CD8-positive, alpha-beta T cell (primary cell): ENCODE measurements at regions of chr15 and their contacts with region 1.

Region 1: DNA sequence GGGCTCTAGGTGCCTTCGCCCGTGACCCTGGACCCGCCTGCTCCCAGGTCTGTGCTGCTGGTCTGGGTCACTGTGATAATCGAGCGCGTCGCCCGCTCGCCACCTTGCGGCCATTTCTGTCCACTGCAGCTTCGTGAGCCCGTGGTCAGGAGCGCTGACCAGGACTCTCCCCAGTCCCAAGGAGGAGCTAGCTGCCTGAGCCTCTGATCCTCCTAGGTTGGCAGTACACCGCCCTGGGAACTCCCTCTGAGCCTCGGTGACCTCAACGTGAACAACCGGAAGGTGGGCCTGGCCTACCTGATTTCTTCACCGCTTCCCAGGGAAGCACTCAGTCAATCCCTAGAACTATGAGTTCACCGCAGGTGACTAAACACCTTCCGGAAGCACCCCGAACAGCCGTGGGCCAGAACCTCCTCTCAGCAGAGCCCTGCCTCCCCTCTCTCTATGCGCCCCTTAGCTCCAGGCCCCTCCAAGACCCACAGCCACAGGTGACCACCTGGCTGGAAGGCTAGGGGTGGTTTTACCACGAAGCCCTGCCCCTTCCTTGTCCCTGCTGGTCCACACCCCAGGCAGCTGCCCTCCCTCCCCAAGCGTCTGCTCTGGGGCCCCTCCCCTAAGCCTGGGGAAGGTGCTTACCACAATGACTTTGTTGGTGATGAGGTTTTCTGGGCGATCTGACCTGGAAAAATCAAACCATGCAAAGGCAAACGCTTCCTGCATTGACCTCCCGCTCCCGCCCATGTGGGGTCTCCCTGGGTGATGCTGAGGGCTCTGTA is 9.7 kb downstream of the PLA2G4D start:
- DNase-seq: peak in 8 of 9 experiments; percentile 14 to 67 (median 41)
- ATAC-seq: peak; percentile 51
- H3K4me3 ChIP-seq: no peak overlapping the region
- H3K4me3 Mint-ChIP-seq: no peak overlapping the region
- H3K27ac ChIP-seq: no peak overlapping the region
- H3K27ac Mint-ChIP-seq: no peak overlapping the region
- H3K4me1 ChIP-seq: peaks cover 6% of the 10 kb centered on the region
- H3K4me1 Mint-ChIP-seq: peaks cover 3% of the 10 kb centered on the region
- H3K27me3 ChIP-seq: no peaks in the 10 kb centered on the region
- H3K27me3 Mint-ChIP-seq: peaks cover 9% of the 10 kb centered on the region
- CTCF ChIP-seq: peak; percentile 83

Region 2: GRCh38 chr15:42069496-42070278 is 15.0 kb before region 1 on chr15:
- CTCF ChIA-PET with region 1: interaction called, 12 read pairs
- POLR2A ChIA-PET with region 1: no interaction called
- intact Hi-C with region 1: no loop called
- DNase-seq: no peak
- ATAC-seq: no peak
- H3K4me3 ChIP-seq: no peak overlapping the region
- H3K4me3 Mint-ChIP-seq: no peak overlapping the region
- H3K27ac ChIP-seq: no peak overlapping the region
- H3K27ac Mint-ChIP-seq: no peak overlapping the region
- H3K4me1 ChIP-seq: no peaks in the 10 kb centered on the region
- H3K4me1 Mint-ChIP-seq: peaks cover 2% of the 10 kb centered on the region
- H3K27me3 ChIP-seq: no peaks in the 10 kb centered on the region
- H3K27me3 Mint-ChIP-seq: peaks cover 10% of the 10 kb centered on the region
- CTCF ChIP-seq: no peak